ENCODE measurements at regions of chr6 and their contacts with region 1.

Region 1: DNA sequence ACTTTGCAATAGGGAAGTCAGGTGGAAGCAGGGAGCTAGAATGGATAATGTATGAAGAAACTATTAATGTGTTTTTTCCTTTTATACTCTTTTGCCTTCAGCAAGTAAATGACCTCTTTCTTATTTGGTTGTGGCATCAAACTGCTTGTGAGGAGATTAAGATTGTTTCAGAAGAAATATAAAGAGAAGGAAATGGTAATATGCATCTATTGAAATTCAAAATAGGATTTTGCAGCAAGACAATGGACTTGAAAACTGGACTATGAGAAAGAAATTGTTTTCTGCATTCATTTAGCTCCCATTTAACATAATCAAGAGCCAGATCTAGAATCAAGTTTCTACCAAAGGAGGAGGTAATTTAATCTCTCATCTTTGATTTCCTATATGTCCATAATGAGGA is 32.3 kb upstream of the KIFC1 start:
- DNase-seq: no peak
- H3K4me3 ChIP-seq: no peak overlapping the region
- H3K27ac ChIP-seq: no peak overlapping the region
- H3K4me1 ChIP-seq: peaks cover 0 to 6% of the 10 kb centered on the region in 2 experiments; a peak in 2 of 4 replicates
- H3K27me3 ChIP-seq: no peaks in the 10 kb centered on the region; the same call in 1 of the 2 replicates
- CTCF ChIP-seq: no peak
- EP300 ChIP-seq: no peak
- RAD21 ChIP-seq: no peak

Region 2: DNA sequence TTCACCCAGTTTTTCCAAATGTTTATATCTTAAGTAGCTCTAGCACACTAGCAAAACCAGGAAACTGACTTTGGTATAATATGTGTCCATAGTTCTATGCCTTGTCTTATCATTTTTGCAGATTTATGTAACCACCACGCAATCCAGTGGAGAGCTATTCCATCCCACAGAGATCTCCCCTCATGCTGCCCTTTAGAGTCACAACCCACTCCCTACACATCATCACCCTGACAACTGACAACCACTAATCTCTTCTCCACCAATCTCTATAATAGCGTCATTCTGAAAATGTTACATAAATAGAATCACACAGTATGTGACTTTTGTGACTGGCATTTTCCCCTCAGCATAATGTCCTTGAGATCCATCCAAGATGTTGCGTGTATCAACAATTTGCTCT is 858.3 kb before region 1 on chr6:
- CTCF ChIA-PET with region 1: no interaction called
- POLR2A ChIA-PET with region 1: no interaction called
- DNase-seq: no peak
- H3K4me3 ChIP-seq: no peak overlapping the region
- H3K27ac ChIP-seq: no peak overlapping the region
- H3K4me1 ChIP-seq: no peaks in the 10 kb centered on the region
- H3K27me3 ChIP-seq: no peaks in the 10 kb centered on the region
- CTCF ChIP-seq: no peak
- EP300 ChIP-seq: no peak
- RAD21 ChIP-seq: no peak

Region 3: GRCh38 chr6:32984605-32985389 is 374.5 kb before region 1 on chr6:
- CTCF ChIA-PET with region 1: no interaction called
- POLR2A ChIA-PET with region 1: no interaction called
- DNase-seq: peak; percentile 79
- H3K4me3 ChIP-seq: no peak overlapping the region; a peak in 1 of 4 replicates
- H3K27ac ChIP-seq: no peak overlapping the region; a peak in 1 of 4 replicates
- H3K4me1 ChIP-seq: no peaks in the 10 kb centered on the region; a peak in 2 of 4 replicates
- H3K27me3 ChIP-seq: no peaks in the 10 kb centered on the region
- CTCF ChIP-seq: peak; percentile 87
- EP300 ChIP-seq: no peak
- RAD21 ChIP-seq: peak; percentile 95

Region 4: DNA sequence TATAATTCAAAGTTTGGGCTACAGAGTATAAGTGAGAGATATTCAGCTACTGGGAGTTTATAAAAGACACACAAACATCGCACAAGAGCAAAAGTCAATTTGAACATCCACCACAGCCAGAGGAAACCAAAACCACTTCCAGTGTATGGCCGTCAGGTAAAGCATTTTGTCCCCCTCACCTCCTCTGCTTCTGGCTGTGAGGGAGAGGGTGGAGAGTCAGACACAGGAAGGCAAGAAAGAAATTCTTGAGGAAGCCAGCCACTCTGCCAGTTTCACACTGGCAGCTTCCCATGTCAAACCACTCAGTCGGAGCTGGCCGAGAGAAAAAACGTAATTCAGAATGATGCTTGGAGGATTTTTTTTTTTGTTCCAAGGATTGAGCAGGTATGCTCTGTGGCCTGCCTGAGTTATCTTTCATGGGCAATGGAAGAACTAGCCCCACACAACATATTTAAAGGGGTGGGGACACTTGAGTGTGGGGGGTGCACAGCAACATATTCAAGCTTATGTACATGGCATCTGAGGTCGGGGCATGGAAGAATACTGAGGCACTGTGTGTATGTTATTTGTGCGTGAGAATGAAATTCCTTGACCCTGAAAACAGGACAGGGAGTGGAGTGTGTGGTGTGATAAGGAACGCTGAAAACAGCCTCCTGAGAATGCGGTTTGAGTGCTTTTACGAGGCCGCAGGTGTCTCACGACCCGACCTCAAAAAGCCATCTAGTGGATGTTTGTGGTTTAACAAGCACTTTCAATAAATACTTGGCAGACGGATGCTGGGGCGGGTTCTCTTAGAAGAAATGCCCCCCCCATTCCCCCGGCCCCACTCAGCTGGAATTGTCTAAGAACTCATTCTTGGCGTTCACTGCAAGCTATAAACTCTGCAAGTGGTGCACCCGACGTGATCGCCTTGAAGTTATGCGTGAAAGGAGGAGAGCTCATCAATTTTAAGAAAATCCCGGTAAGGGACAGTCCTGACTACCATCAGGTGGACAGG is 14.3 kb before region 1 on chr6:
- CTCF ChIA-PET with region 1: interaction called, 20 read pairs
- POLR2A ChIA-PET with region 1: no interaction called
- DNase-seq: peak; percentile 68
- H3K4me3 ChIP-seq: no peak overlapping the region; a peak in 1 of 4 replicates
- H3K27ac ChIP-seq: no peak overlapping the region
- H3K4me1 ChIP-seq: peaks cover 0 to 4% of the 10 kb centered on the region in 2 experiments; a peak in 1 of 4 replicates
- H3K27me3 ChIP-seq: 0 out of 2 replicates have a peak, but pooled peaks cover 3% of the 10 kb centered on the region
- CTCF ChIP-seq: peak; percentile 65
- EP300 ChIP-seq: no peak
- RAD21 ChIP-seq: peak; percentile 60

Measured in SK-N-SH (cell line).